ENCODE measurements at regions of chr11 and their contacts with region 1.

Region 1: DNA sequence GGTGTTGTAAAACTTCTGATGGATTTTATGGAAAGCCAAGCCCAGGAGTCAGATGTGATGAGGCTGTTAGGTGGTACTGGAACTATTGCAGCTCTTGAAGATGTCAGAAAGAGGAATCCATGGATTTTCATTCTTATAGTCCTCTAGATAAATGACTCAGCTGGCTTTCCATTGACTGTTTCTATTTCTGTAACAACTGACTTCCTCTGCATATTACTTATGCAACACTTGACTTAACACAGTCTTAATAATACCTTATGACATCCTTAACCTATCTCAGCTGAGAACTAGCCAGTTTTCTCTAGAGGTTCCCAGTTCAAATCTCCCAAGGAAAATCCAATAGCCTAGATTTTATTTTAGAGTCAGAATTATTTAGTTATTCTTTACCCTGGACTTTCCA is 263.8 kb downstream of the LUZP2 start:
- DNase-seq: no peak
- H3K4me3 ChIP-seq: no peak overlapping the region
- H3K27ac ChIP-seq: no peak overlapping the region
- H3K4me1 ChIP-seq: no peaks in the 10 kb centered on the region
- H3K27me3 ChIP-seq: no peaks in the 10 kb centered on the region
- CTCF ChIP-seq: no peak

Region 2: DNA sequence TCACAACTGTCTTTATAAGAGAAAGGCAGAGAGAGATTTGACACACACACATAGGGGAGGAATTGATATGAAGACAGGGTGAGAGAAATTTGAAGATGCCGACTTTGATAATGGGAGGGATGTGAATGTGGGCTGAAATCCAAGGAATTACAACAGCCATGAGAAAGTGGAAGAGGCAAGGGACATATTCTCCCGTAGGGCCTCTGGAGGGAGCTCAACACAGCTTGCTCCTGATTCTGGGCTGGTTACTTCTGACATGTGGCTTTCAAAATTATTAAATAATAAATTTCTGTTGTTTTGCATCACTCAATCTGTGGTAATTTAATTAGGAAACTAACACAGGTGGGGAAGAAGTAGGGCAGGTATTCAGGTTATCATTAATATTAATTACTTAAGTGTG is 19.1 kb after region 1 on chr11:
- CTCF ChIA-PET with region 1: no interaction called
- dilution Hi-C with region 1: no loop called
- in situ Hi-C with region 1: no loop called
- intact Hi-C with region 1: no loop called
- DNase-seq: no peak
- H3K4me3 ChIP-seq: no peak overlapping the region
- H3K27ac ChIP-seq: no peak overlapping the region
- H3K4me1 ChIP-seq: no peaks in the 10 kb centered on the region
- H3K27me3 ChIP-seq: no peaks in the 10 kb centered on the region
- CTCF ChIP-seq: peak; percentile 6 to 27

Region 3: DNA sequence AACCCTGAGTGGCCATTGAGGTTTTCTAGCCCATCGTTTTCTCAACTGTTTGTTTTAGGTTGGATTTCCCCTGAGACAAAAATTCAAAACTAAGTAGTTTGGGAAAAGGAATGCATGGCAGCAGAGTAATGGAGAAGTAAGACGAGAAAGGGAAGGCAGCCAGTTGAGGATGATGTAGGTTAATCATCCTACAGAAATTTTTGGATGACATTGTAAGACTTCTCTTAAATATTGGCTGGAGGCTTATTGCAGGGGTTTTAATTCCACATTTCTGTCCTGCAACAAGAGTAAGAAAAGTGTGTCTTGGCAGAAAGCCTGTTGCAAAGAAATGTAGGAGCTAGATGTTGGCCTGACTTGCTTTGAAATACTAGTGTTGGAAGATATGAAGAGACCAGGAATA is 45.0 kb after region 1 on chr11:
- CTCF ChIA-PET with region 1: interaction called, 11 read pairs
- dilution Hi-C with region 1: no loop called
- in situ Hi-C with region 1: no loop called
- intact Hi-C with region 1: no loop called
- DNase-seq: no peak
- H3K4me3 ChIP-seq: no peak overlapping the region
- H3K27ac ChIP-seq: no peak overlapping the region
- H3K4me1 ChIP-seq: no peaks in the 10 kb centered on the region
- H3K27me3 ChIP-seq: no peaks in the 10 kb centered on the region
- CTCF ChIP-seq: no peak

Measured in mammary epithelial cell (primary cell).